ENCODE measurements at regions of chr1 and their contacts with region 1.

Region 1: DNA sequence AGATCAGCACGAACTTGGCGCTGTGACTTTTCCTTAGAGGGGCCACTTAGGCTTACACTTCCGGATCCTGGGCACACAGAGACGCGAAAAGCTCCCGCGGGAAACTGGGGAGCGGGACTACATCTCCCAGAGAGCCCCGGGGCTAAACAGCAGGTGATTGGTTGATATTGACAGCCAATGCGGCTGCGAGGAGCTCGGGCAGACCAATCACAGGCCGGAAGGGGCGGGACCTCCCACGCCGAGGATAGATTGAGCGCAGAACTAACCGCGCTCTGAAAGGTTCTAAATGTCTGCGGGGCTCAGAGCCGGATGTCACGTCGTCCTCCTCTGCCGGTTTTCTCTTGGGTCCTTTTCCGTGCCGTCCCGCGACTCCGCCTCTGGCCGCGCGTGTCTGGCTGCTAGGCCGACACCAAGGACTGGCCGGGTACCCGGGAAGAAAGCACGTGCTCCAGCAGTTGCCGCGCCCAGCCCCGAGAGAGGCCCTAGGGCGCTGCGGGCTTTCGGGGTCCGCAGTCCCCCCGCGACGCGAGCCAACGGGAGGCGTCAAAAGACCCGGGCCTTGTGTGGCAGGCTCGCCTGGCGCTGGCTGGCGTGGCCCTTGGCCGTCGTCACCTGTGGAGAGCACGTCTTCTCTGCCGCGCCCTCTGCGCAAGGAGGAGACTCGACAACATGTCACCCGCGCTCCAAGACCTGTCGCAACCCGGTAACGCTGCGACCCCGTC is at the start of gene MTR:
- DNase-seq: peak; percentile 97
- H3K4me3 ChIP-seq: peak within 1 kb of the TSS; percentile 83 to 98 (median 95)
- H3K27ac ChIP-seq: peak within 1 kb of the TSS; percentile 78
- H3K4me1 ChIP-seq: peaks cover 5% of the 10 kb centered on the region
- H3K27me3 ChIP-seq: no peaks in the 10 kb centered on the region
- CTCF ChIP-seq: no peak
- total RNA-seq, gene MTR: 36.7 to 39.8 TPM

Region 2: DNA sequence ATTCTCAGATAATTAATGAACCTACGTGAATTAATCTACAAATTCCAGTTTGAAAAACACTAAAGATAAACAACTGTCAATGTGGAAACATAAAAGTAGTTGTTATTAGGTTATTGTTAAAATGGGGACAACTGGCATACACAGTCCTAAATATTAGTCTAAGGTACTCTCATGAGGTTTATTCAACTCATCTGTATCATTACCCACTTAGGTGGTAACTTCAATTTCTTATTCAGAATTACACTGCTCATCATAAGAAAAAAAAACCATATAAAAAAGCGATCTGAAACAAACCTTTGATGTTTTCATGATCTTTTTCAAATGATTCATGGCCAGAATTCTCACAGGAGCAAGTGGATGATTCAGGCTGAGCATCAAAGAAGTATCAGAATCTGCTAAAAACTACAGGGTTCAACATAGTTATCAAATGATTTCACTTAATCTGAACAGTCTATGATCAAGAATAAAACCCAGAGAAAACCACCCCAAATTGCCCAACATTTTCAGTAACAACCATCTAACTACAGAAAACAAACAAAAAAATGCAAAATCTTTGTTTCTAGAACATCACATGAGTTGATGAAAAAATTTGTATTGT is 204.5 kb before region 1 on chr1:
- CTCF ChIA-PET with region 1: no interaction called
- dilution Hi-C with region 1: no loop called
- in situ Hi-C with region 1: no loop called
- intact Hi-C with region 1: no loop called
- DNase-seq: no peak
- H3K4me3 ChIP-seq: no peak overlapping the region
- H3K27ac ChIP-seq: no peak overlapping the region
- H3K4me1 ChIP-seq: no peaks in the 10 kb centered on the region
- H3K27me3 ChIP-seq: no peaks in the 10 kb centered on the region
- CTCF ChIP-seq: no peak

Region 3: GRCh38 chr1:236699366-236699765 is 95.8 kb before region 1 on chr1:
- CTCF ChIA-PET with region 1: no interaction called
- dilution Hi-C with region 1: no loop called
- in situ Hi-C with region 1: no loop called
- intact Hi-C with region 1: no loop called
- DNase-seq: no peak
- H3K4me3 ChIP-seq: no peak overlapping the region
- H3K27ac ChIP-seq: no peak overlapping the region
- H3K4me1 ChIP-seq: no peaks in the 10 kb centered on the region
- H3K27me3 ChIP-seq: peaks cover 4% of the 10 kb centered on the region
- CTCF ChIP-seq: no peak

Region 4: DNA sequence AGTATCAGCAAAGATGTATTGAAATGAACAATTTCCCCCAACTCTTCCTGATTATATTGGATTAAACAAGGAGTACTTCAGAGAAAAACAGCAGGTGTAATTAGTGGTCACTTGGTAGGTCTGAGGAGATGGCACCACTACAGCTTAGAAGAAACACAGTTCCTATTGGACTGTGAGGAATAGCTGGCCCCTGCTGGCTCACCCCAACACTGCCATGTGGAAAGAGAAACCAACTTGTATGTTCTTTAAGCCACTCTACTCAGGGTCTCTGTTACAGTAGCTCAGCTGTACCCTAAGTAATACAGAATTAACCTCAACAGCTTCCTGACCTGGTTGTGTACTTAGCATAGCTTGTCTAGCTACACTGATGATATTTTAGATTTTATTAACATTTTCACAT is 26.6 kb before region 1 on chr1:
- CTCF ChIA-PET with region 1: no interaction called
- dilution Hi-C with region 1: no loop called
- in situ Hi-C with region 1: no loop called
- intact Hi-C with region 1: no loop called
- DNase-seq: no peak
- H3K4me3 ChIP-seq: no peak overlapping the region
- H3K27ac ChIP-seq: no peak overlapping the region
- H3K4me1 ChIP-seq: no peaks in the 10 kb centered on the region
- H3K27me3 ChIP-seq: peaks cover 2% of the 10 kb centered on the region
- CTCF ChIP-seq: no peak

Region 5: GRCh38 chr1:236904874-236905741 is 109.9 kb after region 1 on chr1:
- CTCF ChIA-PET with region 1: no interaction called
- dilution Hi-C with region 1: no loop called
- in situ Hi-C with region 1: no loop called
- intact Hi-C with region 1: loop called (anchors 5 kb)
- DNase-seq: peak; percentile 81
- H3K4me3 ChIP-seq: no peak overlapping the region
- H3K27ac ChIP-seq: no peak overlapping the region
- H3K4me1 ChIP-seq: no peaks in the 10 kb centered on the region
- H3K27me3 ChIP-seq: no peaks in the 10 kb centered on the region
- CTCF ChIP-seq: no peak